Dorsolateral prefrontal cortex (tissue), 120 donors: ENCODE measurements at regions of chr13 and their contacts with region 1.

Region 1: DNA sequence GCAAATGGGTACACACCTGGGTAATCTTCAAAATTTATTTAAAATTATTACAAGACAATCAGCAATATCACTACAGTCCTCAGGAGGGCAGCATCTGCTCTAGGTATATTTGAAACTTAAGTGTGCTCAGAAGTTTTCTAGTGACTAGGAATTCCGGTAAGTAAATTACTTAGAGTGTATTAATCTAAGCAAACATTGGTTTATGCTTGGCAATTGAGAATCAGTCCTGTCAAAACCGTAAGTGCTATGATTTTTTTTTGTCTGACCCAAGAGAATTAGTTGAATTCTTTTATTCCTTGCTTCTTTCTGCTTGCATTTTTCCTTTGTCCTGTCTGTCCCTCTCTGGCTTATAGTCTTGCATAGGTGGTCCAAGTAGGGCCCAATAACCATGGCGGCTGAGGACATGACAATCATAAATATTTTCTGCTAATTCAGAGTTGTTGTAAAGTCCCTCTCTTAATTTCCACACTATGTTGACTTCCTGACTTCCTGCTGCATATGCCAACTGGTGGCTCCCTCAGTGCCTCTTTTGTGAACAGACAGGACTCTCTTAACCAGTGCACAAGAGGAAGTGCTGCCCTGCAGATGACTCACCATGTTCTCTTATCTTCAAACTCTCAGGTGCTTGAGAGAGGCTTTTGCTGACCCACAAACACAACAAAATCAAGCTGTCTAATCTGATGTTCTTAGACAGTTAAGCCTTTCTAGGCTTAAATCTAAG is 82.2 kb downstream of the SLAIN1 start:
- DNase-seq: peak in 1 of 10 donors; percentile 45
- H3K4me3 ChIP-seq: peak overlapping the region in 3 of 59 donors; percentile 3 to 26 (median 13)
- H3K27ac ChIP-seq: no peak overlapping the region
- H3K27me3 ChIP-seq: no peaks in the 10 kb centered on the region
- CTCF ChIP-seq: peak; percentile 63 to 89 (median 76)

Region 2: DNA sequence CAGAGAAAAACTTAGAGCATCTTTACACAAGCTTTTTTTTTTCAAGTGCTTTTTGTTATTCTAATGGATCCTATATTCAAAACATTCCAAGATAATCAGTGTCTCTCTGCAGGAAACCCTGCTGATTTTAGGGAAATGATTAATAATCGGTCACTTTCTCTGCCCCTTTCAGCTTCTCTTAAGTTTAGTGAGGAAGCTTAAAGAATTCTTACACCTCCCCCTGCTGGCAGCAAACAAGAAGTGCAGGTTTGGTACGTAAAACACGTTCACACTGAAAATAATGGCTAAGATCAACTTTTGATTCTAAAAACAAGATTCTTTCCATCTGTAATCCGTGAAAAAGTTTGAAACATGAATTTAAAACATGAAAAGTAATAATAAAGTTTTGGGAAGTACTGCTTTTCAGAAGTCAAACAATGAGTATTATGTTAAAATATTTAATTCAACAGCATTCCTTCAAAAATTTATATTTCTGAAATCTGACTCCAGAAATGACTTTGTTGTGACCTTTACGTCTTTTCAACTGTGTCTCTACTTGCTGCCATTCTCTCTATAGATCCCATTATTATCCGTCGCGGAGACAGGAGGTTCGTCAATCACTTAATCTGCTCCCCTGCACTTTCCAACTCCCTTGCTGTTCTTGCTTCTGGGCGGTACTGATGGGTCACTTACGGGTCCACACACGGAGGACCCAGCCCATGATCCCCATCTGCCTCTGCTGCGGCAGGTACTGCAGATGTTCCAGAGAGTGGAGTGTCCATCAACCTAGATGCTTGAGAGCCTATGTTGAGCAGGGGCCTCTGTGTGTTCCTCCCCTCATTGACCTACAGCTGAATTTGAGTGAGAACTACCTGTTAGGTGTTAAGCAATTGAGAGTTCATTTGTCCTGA is 342.0 kb after region 1 on chr13:
- intact Hi-C with region 1: loop called (anchors 2 kb)
- DNase-seq: peak in 8 of 10 donors; percentile 11 to 61 (median 43)
- H3K4me3 ChIP-seq: peak overlapping the region in 38 of 59 donors; percentile 1 to 56 (median 25)
- H3K27ac ChIP-seq: no peak overlapping the region
- H3K27me3 ChIP-seq: no peaks in the 10 kb centered on the region
- CTCF ChIP-seq: peak; percentile 88 to 99 (median 96)

Region 3: GRCh38 chr13:78978381-78978998 is 1198.8 kb after region 1 on chr13:
- intact Hi-C with region 1: loop called in 1 of 2 experiments (anchors 5 kb)
- DNase-seq: peak in 3 of 10 donors; percentile 13 to 45 (median 26)
- H3K4me3 ChIP-seq: no peak overlapping the region
- H3K27ac ChIP-seq: no peak overlapping the region
- H3K27me3 ChIP-seq: peaks cover 0 to 7% (median 0%) of the 10 kb centered on the region in 45 donors
- CTCF ChIP-seq: peak; percentile 45 to 90 (median 79)